Activated T-helper 1 cell treated with anti-CD3 and anti-CD28 coated beads, Interleukin-12 subunit alpha, Interleukin-12 subunit beta, Interleukin-2, Interleukin-4 antibody, amounts not matched to agents 30 ng/mL and 10 ng/mL and 1 ng/mL, durations not matched to agents 14 hours and 24 hours and 36 hours (primary cell): ENCODE measurements at regions of chr19 and their contacts with region 1.

Region 1: GRCh38 chr19:9796113-9796773 is 22.6 kb downstream of the FBXL12 start:
- DNase-seq: peak; percentile 79
- H3K4me3 Mint-ChIP-seq: no peak overlapping the region
- H3K27ac Mint-ChIP-seq: peak overlapping the region; percentile 61
- H3K4me1 Mint-ChIP-seq: peaks cover 25% of the 10 kb centered on the region
- H3K27me3 Mint-ChIP-seq: no peaks in the 10 kb centered on the region

Region 2: DNA sequence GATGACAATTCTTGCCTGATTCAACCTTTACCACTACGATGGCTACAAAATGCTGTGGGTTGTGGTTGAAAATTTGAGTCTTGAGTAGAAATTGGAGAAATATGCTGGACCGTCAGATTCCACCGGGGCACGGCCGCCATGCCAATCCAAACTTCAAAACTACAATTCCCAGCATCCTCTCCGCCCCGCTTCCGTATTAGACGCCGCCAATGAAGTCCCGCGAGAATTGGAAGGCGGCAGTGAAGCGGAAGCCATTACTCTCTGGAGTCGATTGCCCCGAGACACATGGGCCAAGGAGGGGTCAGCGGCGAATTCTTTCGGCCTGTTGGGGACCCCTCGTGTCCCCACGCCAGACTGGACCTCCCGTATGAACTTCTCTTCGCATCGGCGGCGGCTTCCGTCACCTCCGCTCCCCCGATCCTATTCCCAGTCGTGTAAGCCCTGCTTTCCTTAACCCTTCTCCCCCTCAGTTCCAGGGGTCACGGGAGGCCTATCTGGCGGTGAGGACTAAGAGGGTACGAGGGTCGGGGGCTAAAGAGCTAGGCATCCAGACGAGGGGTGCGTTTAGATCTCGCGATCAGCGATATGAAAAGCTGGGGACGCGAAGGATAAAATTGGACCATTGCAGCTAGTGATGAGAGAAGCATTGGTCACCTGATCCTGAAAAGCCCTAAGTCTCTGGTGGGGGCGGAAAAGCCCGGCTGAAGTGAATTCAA is 655.9 kb before region 1 on chr19 and contains the start of gene ZNF317:
- intact Hi-C with region 1: loop called (anchors 1 kb)
- DNase-seq: peak; percentile 88
- H3K4me3 Mint-ChIP-seq: peak within 1 kb of the TSS; percentile 95
- H3K27ac Mint-ChIP-seq: peak within 1 kb of the TSS; percentile 94
- H3K4me1 Mint-ChIP-seq: peaks cover 33% of the 10 kb centered on the region
- H3K27me3 Mint-ChIP-seq: no peaks in the 10 kb centered on the region
- total RNA-seq, gene ZNF317: 50.7 and 53.3 TPM in 2 replicates

Region 3: GRCh38 chr19:9435279-9436268 is 360.7 kb before region 1 on chr19 and contains the start of gene ZNF266:
- intact Hi-C with region 1: loop called (anchors 1 kb)
- DNase-seq: peak; percentile 88
- H3K4me3 Mint-ChIP-seq: peak within 1 kb of the TSS; percentile 94
- H3K27ac Mint-ChIP-seq: peak within 1 kb of the TSS; percentile 97
- H3K4me1 Mint-ChIP-seq: peaks cover 29% of the 10 kb centered on the region
- H3K27me3 Mint-ChIP-seq: no peaks in the 10 kb centered on the region
- total RNA-seq, gene ZNF266: 25.3 and 28.2 TPM in 2 replicates

Region 4: GRCh38 chr19:9621156-9622037 is 174.8 kb before region 1 on chr19 and contains the start of gene ZNF561:
- intact Hi-C with region 1: loop called (anchors 1 kb)
- DNase-seq: peak; percentile 80
- H3K4me3 Mint-ChIP-seq: peak within 1 kb of the TSS; percentile 100
- H3K27ac Mint-ChIP-seq: peak within 1 kb of the TSS; percentile 99
- H3K4me1 Mint-ChIP-seq: peaks cover 28% of the 10 kb centered on the region
- H3K27me3 Mint-ChIP-seq: no peaks in the 10 kb centered on the region
- total RNA-seq, gene ZNF561: 33.2 and 36.7 TPM in 2 replicates

Region 5: DNA sequence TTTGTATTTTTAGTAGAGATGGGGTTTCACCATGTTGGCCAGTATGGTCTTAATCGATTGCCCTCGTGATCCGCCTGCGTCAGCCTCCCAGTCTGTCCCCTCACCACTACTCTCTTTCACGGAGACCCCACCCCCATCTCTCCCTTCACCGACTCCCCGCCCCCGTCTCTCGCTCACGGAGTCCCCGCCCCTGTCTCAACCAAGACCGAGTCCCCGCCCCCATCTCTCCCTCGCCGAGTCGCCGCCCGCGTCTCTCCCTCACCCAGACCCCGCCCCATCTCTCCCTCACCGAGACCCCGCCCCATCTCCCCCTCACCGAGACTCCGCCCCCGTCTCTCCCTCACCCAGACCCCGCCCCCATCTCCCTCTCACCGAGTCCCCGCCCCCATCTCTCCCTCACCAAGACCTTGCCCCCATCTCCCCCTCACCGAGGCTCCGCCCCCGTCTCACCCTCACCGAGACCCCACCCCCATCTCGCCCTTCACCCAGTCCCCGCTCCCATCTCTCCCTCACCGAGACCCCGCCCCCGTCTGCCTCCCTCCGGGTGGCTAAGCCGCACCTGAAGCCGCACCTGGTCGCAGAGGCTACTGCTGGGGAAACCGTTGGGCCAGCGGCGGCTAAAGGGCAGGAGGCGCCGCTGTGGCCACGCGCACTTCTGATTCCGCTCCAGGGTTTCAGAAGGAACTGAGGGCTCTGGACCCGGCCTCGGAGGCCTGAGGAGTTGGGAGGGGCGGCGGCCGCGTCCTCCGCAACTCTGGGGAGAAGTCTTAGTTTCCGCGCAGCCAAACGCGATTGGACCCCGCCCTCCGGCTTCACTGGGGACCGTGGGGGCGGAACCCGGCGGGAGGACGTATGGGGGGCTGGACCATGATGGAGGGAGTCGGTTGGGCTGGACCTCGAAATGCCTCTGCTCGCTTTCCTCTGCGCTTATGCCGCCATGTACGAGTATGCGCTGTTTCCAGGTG is 10.6 kb before region 1 on chr19:
- intact Hi-C with region 1: loop called (anchors 1 kb)
- DNase-seq: peak; percentile 90
- H3K4me3 Mint-ChIP-seq: peak overlapping the region; percentile 87
- H3K27ac Mint-ChIP-seq: peak overlapping the region; percentile 89
- H3K4me1 Mint-ChIP-seq: peaks cover 20% of the 10 kb centered on the region
- H3K27me3 Mint-ChIP-seq: no peaks in the 10 kb centered on the region